ENCODE measurements at regions of chr10 and their contacts with region 1.

Region 1: GRCh38 chr10:67492317-67493019 is 203.5 kb downstream of the CTNNA3 start:
- DNase-seq: no peak
- ATAC-seq: peak; percentile 44; the same call in 1 of the 2 replicates
- H3K4me3 ChIP-seq: no peak overlapping the region
- H3K27ac ChIP-seq: no peak overlapping the region
- H3K4me1 ChIP-seq: peaks cover 4 to 11% of the 10 kb centered on the region in 2 experiments; a peak in 3 of 4 replicates
- H3K27me3 ChIP-seq: no peaks in the 10 kb centered on the region
- CTCF ChIP-seq: no peak
- POLR2A ChIP-seq: no peak
- RAD21 ChIP-seq: no peak

Region 2: DNA sequence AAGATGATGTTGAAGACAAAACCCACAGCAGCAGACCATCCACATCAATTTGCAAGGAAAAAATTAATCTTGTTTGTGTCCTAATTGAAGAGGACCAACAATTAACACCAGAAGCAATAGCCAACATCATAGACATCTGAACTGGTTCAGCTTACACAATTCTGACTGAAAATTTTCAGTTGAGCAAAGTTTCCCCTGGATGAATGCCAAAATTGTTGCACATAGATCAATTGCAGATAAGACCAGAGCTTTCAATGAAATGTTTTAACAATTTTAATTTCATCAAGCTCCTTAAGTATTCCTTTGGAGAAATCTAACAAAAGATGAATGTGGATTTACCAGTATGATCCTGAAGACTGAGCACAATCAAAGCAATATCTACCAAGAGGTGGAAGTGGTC is 34.9 kb after region 1 on chr10:
- CTCF ChIA-PET with region 1: no interaction called
- POLR2A ChIA-PET with region 1: no interaction called
- RAD21 ChIA-PET with region 1: no interaction called
- intact Hi-C with region 1: loop called (anchors 1 kb)
- DNase-seq: no peak
- ATAC-seq: no peak
- H3K4me3 ChIP-seq: no peak overlapping the region
- H3K27ac ChIP-seq: no peak overlapping the region
- H3K4me1 ChIP-seq: no peaks in the 10 kb centered on the region
- H3K27me3 ChIP-seq: no peaks in the 10 kb centered on the region
- CTCF ChIP-seq: no peak
- POLR2A ChIP-seq: no peak
- RAD21 ChIP-seq: no peak